SK-N-SH (cell line): ENCODE measurements at regions of chr13 and their contacts with region 1.

Region 1: GRCh38 chr13:102197193-102197592 is 204.7 kb downstream of the FGF14 start:
- DNase-seq: no peak
- H3K4me3 ChIP-seq: no peak overlapping the region
- H3K27ac ChIP-seq: peak overlapping the region; percentile 84 to 100; a peak in 3 of 4 replicates
- H3K4me1 ChIP-seq: peaks cover 20 to 24% of the 10 kb centered on the region in 2 experiments; a peak in 3 of 4 replicates
- H3K27me3 ChIP-seq: no peaks in the 10 kb centered on the region
- CTCF ChIP-seq: peak; percentile 46
- EP300 ChIP-seq: no peak
- RAD21 ChIP-seq: peak; percentile 81

Region 2: GRCh38 chr13:102394158-102395053 is 197.2 kb after region 1 on chr13:
- CTCF ChIA-PET with region 1: interaction called, 18 read pairs
- POLR2A ChIA-PET with region 1: interaction called, 27 read pairs
- DNase-seq: peak; percentile 95
- H3K4me3 ChIP-seq: peak overlapping the region; percentile 75 to 86
- H3K27ac ChIP-seq: peak overlapping the region; percentile 25 to 96; a peak in 3 of 4 replicates
- H3K4me1 ChIP-seq: peaks cover 0 to 41% of the 10 kb centered on the region in 2 experiments; a peak in 2 of 4 replicates
- H3K27me3 ChIP-seq: no peaks in the 10 kb centered on the region
- CTCF ChIP-seq: peak; percentile 46
- EP300 ChIP-seq: peak; percentile 3 to 24; a peak in 1 of 4 replicates
- RAD21 ChIP-seq: peak; percentile 64

Region 3: GRCh38 chr13:102402290-102402689 is 205.1 kb after region 1 on chr13:
- CTCF ChIA-PET with region 1: interaction called, 17 read pairs
- POLR2A ChIA-PET with region 1: interaction called, 16 read pairs
- DNase-seq: peak; percentile 88
- H3K4me3 ChIP-seq: peak overlapping the region; percentile 67 to 83
- H3K27ac ChIP-seq: peak overlapping the region in 1 of 2 experiments; percentile 96; a peak in 2 of 4 replicates
- H3K4me1 ChIP-seq: peaks cover 0 to under 1% of the 10 kb centered on the region in 2 experiments; a peak in 2 of 4 replicates
- H3K27me3 ChIP-seq: no peaks in the 10 kb centered on the region
- CTCF ChIP-seq: peak; percentile 30
- EP300 ChIP-seq: no peak; a peak in 1 of 4 replicates
- RAD21 ChIP-seq: peak; percentile 62